ENCODE measurements at regions of chr19 and their contacts with region 1.

Region 1: DNA sequence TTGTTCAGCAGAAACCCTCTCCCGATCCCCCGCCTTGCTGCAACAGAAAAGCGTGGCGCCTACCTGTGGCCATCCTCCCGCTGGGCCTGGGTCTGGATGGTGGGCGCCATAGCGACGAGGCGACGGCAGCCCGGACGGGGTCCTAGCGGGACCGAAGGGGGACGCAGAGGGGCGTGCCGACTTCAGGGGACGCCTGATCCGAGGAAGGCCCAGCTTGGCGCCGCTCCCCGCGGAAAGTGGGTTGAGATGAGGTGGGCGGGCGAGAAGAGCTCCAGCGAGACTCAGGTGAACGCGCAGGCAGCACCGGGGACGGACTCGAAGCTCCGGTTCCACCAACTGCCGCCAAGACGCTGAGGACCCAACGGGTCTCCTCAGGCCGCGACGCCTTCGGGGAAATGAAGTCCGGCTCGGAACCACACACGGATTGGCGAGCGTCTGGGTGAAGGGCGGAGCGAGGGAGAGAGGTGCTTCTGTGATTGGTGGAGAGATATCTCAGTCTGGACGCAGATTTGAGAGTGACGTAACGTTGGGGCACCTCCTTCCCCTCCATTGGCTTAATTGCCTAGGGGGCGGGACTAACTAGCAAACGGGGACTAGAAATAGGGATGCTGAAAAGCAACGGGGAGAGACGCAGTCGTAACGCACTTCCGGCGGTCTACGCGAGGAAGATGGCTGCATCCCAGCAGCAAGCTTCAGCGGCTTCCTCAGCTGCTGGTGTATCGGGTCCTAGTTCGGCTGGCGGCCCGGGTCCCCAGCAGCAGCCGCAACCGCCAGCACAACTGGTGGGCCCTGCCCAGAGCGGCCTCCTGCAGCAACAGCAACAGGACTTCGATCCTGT is at the starts of genes MED29 and PAF1:
- DNase-seq: peak; percentile 96
- H3K4me3 ChIP-seq: peak within 1 kb of the TSS; percentile 85 to 100 (median 90)
- H3K27ac ChIP-seq: peak within 1 kb of the TSS; percentile 99 to 100 (median 100)
- H3K4me1 ChIP-seq: peaks cover 17 to 45% (median 21%) of the 10 kb centered on the region in 3 donors
- H3K27me3 ChIP-seq: no peaks in the 10 kb centered on the region
- CTCF ChIP-seq: peak in 3 of 6 experiments; percentile 8 to 13 (median 9)
- POLR2A ChIP-seq: peak in 3 of 4 donors; percentile 53 to 91 (median 84)
- total RNA-seq, gene MED29: 11.8 to 20.1 (median 16.5) TPM
- total RNA-seq, gene PAF1: 35.4 to 53.6 (median 38.1) TPM

Region 2: GRCh38 chr19:39341719-39342604 is 49.0 kb before region 1 on chr19 and contains the start of gene SAMD4B:
- intact Hi-C with region 1: loop called (anchors 5 kb)
- DNase-seq: peak; percentile 96
- H3K4me3 ChIP-seq: peak within 1 kb of the TSS; percentile 84 to 97 (median 95)
- H3K27ac ChIP-seq: peak within 1 kb of the TSS; percentile 92 to 99 (median 94)
- H3K4me1 ChIP-seq: peaks cover 28 to 65% (median 32%) of the 10 kb centered on the region in 3 donors
- H3K27me3 ChIP-seq: no peaks in the 10 kb centered on the region
- CTCF ChIP-seq: peak; percentile 66 to 90 (median 78)
- POLR2A ChIP-seq: peak in 3 of 4 donors; percentile 86 to 97 (median 87)
- total RNA-seq, gene SAMD4B: 49.1 to 131 (median 75.2) TPM

Region 3: GRCh38 chr19:39423258-39424086 is 32.5 kb after region 1 on chr19:
- intact Hi-C with region 1: no loop called
- DNase-seq: no peak
- H3K4me3 ChIP-seq: no peak overlapping the region
- H3K27ac ChIP-seq: no peak overlapping the region
- H3K4me1 ChIP-seq: peaks cover 0 to 7% (median 4%) of the 10 kb centered on the region in 3 donors
- H3K27me3 ChIP-seq: no peaks in the 10 kb centered on the region
- CTCF ChIP-seq: no peak
- POLR2A ChIP-seq: no peak

Measured in esophagus squamous epithelium (tissue), 5 donors.